ENCODE measurements at regions of chr9 and their contacts with region 1.

Region 1: GRCh38 chr9:130331573-130331972 is 66.0 kb downstream of the HMCN2 start:
- DNase-seq: no peak

Region 2: DNA sequence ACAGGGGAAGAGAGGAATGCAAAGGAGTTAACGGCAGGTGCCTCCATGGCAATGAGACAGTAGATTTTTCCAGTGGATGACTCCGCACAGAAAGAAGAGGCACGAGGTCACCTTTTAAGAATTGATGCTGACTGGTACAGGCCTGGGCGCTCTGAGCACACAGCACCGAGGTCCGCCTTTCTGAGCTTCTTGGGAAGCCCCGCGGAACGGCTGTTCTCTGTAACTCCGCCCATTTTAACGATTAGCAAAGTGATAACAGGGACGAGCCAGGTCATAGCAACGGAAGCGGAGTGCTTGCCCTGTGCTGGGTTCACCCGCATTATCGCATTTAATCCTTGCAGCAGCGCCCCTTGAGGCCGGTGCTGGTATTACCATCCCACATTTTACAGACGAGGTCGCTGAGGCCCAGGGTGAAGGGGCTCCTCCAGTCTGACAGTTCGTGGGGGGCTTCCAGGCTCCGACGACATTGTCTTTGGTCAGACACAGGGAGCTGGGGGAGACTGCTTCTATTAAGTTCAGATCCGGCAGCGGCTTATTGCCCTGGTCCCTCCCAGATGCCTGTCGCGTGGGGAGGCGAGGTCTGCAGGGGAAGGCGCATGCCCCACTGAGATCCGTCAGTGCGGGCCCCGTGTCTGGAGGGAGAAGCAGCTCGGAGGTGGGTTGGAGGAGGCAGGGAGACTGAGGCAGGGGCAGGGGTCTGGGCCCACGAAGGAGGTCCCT is 88.4 kb before region 1 on chr9:
- intact Hi-C with region 1: loop called (anchors 5 kb)
- DNase-seq: peak; percentile 84